BJ (cell line): ENCODE measurements at regions of chr1 and their contacts with region 1.

Region 1: DNA sequence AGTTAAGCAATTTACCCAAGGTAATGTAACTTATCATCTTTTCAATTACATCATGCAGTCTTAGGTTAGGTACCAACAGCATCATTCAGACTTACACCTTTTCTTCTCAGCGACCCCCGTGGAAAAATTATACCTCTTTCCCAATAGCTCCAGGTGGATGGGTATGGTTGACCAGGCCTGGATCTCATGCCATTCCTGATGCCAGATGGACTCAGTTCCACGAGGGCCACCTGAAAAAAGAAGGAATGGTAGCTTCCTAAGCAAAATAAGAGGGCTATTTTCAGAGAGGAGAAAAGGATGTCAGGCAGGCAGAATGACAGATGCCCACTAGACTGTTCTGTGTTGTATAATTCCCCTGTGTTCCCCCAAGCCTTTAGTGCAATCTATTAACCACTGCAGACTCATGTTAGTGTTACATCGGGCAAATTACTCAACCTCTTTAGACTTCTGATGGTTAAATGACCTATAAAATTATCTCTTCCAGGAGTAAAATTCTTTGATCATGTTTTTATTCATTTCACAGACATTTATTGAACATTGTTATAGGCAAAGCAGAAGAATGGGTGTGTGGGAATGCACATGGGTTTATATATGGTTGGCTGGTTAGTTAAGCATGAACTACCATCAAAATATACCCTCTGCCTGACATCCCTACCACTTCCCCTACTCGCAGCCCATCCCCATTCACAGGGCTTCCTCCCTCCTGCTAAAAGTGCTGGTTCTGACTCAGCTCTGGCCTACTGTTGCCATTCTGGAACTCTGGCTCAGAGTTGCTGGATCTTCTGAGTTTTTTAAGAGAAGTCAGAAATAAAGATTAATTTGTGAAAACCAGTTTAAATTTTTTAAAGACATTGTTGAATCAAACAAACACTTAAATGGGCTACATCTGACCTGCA is 10.6 kb upstream of the MYSM1 start:
- DNase-seq: no peak
- H3K4me3 ChIP-seq: no peak overlapping the region
- H3K27me3 ChIP-seq: no peaks in the 10 kb centered on the region
- CTCF ChIP-seq: no peak

Region 2: DNA sequence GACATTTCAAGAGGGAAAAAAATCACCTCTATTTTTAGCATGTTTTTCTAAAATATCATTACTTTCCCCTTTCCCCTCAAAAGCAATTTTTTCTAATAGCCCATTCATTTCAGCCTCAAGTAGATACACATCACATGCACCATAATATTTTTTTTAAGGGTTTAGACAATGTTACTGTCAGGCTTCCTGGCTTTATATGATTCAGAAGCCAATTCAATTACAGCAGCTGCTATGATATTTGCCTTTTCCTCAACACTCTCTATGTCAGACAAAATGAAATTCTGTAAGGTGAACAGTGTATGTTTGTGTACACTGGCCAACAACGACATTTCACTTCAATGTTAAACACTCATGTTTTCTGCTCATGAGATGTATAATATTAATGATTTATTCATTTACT is 210.4 kb before region 1 on chr1:
- CTCF ChIA-PET with region 1: no interaction called
- POLR2A ChIA-PET with region 1: no interaction called
- DNase-seq: no peak
- H3K4me3 ChIP-seq: no peak overlapping the region
- H3K27me3 ChIP-seq: no peaks in the 10 kb centered on the region
- CTCF ChIP-seq: no peak

Region 3: DNA sequence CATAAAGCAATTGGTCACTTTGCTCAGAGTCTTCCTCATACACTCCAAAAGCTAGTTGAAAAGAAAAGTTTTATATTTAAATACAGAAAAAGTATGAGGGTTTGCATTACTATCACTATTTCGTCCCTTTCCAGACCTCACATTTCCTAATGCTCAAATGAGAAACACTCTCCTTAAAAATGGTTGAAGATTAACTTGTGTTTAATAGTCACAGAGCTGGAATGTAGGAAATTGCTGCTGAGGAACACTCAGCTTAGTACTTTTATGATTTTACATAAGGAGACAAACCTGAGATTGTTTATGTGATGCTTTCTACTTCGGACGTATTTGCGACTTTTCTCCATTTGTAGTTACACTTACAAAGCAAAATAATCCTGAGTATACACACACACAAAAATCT is 50.3 kb before region 1 on chr1:
- CTCF ChIA-PET with region 1: no interaction called
- POLR2A ChIA-PET with region 1: no interaction called
- DNase-seq: no peak
- H3K4me3 ChIP-seq: no peak overlapping the region
- H3K27me3 ChIP-seq: no peaks in the 10 kb centered on the region
- CTCF ChIP-seq: no peak

Region 4: GRCh38 chr1:58688931-58689566 is 21.4 kb before region 1 on chr1:
- CTCF ChIA-PET with region 1: no interaction called
- POLR2A ChIA-PET with region 1: no interaction called
- DNase-seq: no peak
- H3K4me3 ChIP-seq: no peak overlapping the region
- H3K27me3 ChIP-seq: no peaks in the 10 kb centered on the region
- CTCF ChIP-seq: no peak

Region 5: DNA sequence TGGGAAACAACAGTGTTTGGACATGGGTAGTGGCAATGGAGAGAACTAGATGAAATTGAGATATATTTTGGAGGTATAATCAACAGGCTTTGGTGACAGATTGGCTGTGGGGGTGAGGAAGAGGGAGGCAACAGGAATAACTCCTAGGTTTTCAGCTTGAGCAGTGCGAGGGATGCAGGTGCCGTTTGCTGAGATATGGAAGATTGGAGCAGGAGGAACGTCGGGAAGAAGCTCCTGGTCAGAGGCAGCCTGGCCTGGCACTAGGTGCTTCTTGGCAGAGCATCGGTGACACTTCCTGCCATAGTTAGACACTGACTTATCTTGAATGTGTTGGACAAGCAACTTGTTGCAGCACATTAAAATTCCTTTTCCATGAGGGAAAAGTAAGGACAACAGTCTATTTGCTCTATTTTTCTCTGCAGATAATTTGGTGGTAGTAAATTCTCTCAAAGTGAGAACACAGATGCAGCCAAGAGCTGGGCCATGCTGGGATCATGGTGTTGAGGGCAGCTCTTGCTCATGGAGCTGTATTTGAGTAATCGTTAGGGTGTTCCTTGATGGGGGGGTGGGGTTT is 10.9 kb after region 1 on chr1:
- CTCF ChIA-PET with region 1: interaction called, 11 read pairs
- POLR2A ChIA-PET with region 1: no interaction called
- DNase-seq: no peak
- H3K4me3 ChIP-seq: no peak overlapping the region
- H3K27me3 ChIP-seq: no peaks in the 10 kb centered on the region
- CTCF ChIP-seq: no peak

Region 6: DNA sequence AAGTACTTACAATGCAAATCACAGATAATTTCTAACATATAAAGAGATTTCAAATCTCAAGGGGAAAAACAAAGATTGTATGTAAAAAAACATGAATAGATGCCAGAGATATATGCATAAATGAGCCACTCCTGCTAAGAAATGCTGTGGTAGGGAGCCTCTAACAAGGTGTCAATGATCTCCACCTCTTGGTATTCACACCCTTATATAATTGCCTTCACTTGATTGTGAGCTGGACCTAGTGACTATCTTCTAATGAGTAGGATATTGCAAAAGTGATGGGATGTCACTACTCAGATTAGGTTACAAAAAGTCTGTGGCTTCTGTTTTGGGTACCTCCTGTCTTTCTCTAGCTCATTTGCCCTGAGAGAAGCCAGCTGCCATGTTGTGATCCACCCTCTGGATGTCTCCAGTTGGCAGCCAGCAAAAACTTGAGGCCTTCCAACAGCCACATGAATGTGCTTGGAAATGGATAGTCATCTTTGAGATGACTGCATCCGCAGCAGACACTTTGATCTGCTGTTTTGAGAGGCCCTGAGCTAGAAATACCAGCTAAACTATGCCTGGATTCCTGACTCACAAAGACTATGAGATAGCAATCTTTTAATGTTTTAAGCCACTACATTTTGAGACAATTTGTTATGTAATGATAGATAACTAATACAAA is 390.4 kb after region 1 on chr1:
- CTCF ChIA-PET with region 1: no interaction called
- POLR2A ChIA-PET with region 1: interaction called, 20 read pairs
- DNase-seq: no peak
- H3K4me3 ChIP-seq: no peak overlapping the region
- H3K27me3 ChIP-seq: no peaks in the 10 kb centered on the region
- CTCF ChIP-seq: no peak